ENCODE measurements at regions of chr20 and their contacts with region 1.

Region 1: GRCh38 chr20:4082406-4083097 is 67.2 kb upstream of the RNF24 start:
- DNase-seq: no peak
- H3K4me3 ChIP-seq: peak overlapping the region in 2 of 4 experiments; percentile 7 to 34; a peak in 2 of 8 replicates
- H3K27ac ChIP-seq: no peak overlapping the region
- H3K4me1 ChIP-seq: peaks cover 3 to 14% (median 6%) of the 10 kb centered on the region in 4 experiments
- H3K27me3 ChIP-seq: peaks cover 0 to 6% (median 1%) of the 10 kb centered on the region in 4 experiments; a peak in 3 of 7 replicates
- CTCF ChIP-seq: no peak
- EP300 ChIP-seq: no peak
- POLR2A ChIP-seq: no peak
- RAD21 ChIP-seq: no peak

Region 2: GRCh38 chr20:4014031-4014474 is 68.5 kb before region 1 on chr20:
- CTCF ChIA-PET with region 1: interaction called, 15 read pairs
- POLR2A ChIA-PET with region 1: interaction called, 3 read pairs
- DNase-seq: no peak
- H3K4me3 ChIP-seq: peak overlapping the region; percentile 71 to 84 (median 81); a peak in 6 of 8 replicates
- H3K27ac ChIP-seq: no peak overlapping the region
- H3K4me1 ChIP-seq: peaks cover 5 to 26% (median 18%) of the 10 kb centered on the region in 4 experiments; a peak in 6 of 7 replicates
- H3K27me3 ChIP-seq: no peaks in the 10 kb centered on the region; a peak in 1 of 7 replicates
- CTCF ChIP-seq: peak in 2 of 3 experiments; percentile 25 to 32; a peak in 2 of 4 replicates
- EP300 ChIP-seq: no peak
- POLR2A ChIP-seq: no peak
- RAD21 ChIP-seq: peak; percentile 57 to 61

Region 3: DNA sequence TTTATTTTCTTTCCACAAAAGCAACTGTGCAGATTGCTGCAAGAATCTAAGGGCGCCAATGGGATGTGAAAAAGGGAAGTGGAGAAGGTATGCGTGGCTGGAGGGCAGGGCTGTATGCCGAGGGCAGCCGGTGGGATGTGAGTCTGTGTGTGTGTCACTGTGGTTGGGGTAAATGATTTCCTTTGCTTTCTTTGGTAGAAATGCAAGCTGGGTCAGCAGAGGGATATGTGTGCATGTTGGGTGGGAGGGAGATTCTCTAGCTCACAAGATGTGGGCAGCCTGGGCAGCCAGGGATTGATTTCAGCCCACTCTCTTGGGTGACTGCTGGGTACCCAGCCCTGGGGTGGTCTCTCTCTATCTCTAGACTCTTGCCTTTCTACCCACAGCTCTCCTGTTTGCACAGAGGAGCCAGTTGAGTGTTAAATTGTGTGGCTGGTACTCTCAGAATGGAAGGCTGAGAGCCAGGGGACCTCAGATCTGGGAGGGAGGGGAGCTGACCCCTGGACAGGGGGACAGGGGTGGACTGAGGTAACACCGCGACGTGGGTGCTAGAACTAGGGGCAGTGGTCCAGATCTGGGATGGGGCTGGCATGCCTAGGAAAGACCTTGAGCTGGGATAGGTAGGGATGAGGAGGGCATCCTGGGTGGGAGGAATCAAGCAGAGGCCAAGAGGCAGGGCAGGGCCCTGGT is 69.6 kb after region 1 on chr20:
- CTCF ChIA-PET with region 1: no interaction called
- POLR2A ChIA-PET with region 1: no interaction called
- DNase-seq: no peak
- H3K4me3 ChIP-seq: no peak overlapping the region
- H3K27ac ChIP-seq: no peak overlapping the region
- H3K4me1 ChIP-seq: peaks cover 0 to 7% (median 2%) of the 10 kb centered on the region in 4 experiments; a peak in 4 of 7 replicates
- H3K27me3 ChIP-seq: peaks cover 2 to 17% (median 14%) of the 10 kb centered on the region in 4 experiments
- CTCF ChIP-seq: no peak
- EP300 ChIP-seq: no peak
- POLR2A ChIP-seq: no peak
- RAD21 ChIP-seq: no peak

Measured in H1 (cell line).